ENCODE measurements at regions of chr19 and their contacts with region 1.

Region 1: DNA sequence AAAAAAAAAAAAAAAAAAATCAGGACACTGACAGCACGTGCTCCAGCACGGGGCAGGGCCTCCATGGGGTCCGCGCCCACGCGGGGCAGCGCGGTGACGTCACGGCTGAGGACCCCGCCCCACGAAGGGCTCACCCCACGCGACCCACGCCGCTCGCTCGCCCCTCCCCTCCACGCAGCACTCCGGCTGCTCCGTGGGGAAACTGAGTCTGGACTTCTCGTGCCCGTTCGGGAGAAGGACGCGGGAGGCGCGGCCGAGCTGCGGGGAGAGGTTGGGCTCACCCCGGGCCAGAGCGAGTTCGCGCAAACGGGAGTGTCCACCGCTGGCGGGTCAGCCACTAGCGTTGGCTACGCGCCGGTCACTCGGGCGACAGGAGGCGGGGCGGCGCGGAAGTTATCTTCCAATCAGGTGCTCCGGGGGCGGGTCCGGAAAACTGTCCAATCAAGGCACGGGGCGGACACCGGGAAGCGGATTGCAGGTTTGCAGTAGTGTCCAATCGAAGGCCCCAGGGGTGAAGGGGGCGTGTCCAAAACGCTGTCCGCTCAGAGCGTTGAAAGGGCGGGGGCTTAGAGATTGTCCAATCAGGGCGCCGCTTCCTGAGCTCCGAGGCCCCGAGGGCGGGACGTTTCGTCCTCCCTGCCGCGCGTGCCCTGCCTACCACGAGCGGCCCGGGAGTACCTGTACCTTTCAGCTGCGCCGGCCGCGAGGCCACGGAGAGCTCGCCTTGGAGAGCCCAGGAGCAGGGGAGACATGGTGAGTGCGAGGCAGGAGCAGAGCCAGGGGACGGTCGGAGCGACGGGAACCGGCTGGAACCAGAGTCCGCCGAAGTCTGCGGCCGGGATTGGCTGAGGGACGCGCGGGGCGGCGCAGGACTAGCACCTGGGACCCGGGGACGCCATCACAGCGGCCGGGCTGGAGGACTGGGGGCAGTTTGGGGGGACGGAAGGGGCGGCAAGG is at the start of gene ZNF57:
- DNase-seq: peak; percentile 100
- H3K4me3 ChIP-seq: peak within 1 kb of the TSS; percentile 74 to 89 (median 77)
- H3K27ac ChIP-seq: peak within 1 kb of the TSS; percentile 79 to 91 (median 88)
- H3K4me1 ChIP-seq: peaks cover 7 to 19% (median 17%) of the 10 kb centered on the region in 4 donors
- H3K27me3 ChIP-seq: no peaks in the 10 kb centered on the region
- CTCF ChIP-seq: peak in 1 of 3 experiments; percentile 19
- EP300 ChIP-seq: no peak
- POLR2A ChIP-seq: peak; percentile 21
- total RNA-seq, gene ZNF57: 2.2 to 3.6 (median 2.3) TPM

Region 2: DNA sequence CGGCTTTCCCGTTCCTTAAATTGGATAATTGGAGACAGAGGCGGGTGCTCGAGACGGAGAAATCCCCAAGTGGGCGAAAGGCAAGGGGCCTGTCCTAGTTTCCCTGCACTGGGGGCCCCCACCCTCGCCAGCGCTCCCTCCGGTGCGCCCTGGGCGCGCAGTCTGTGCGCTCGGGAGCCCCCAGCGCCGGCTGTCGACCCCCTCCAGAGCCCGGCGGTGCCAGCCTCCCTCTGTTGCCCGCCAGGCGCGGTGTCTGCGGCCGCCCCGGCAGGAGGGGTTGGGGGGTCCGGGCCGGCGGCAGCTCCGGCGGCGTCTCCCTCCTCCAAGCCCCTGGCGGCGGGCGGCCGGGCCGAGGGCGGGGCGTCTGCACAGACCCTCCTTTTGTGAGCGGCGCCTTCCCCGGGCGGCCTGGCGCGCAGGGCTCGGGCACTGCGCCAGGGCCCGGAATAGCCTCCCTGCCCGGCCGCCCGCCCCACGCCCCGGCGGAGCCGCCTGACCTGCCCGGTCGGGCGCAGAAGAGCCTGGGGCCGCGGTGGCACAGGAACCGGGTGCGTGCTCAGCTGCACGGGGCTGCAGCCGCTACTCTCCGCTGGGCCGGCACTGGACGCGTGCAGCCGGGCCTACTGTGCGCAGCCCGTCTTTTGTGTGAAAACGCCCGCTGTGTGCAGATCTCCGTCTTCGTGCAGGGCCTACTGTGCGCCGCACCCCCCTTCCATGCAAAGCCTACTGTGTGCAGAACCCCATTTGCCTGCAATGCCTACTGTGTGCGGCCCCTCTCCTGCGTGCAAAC is 411.4 kb before region 1 on chr19:
- intact Hi-C with region 1: no loop called
- DNase-seq: no peak
- H3K4me3 ChIP-seq: peak overlapping the region; percentile 58 to 61 (median 60)
- H3K27ac ChIP-seq: peak overlapping the region; percentile 64 to 80 (median 76)
- H3K4me1 ChIP-seq: peaks cover 37 to 55% (median 48%) of the 10 kb centered on the region in 4 donors
- H3K27me3 ChIP-seq: no peaks in the 10 kb centered on the region
- CTCF ChIP-seq: no peak
- EP300 ChIP-seq: no peak
- POLR2A ChIP-seq: no peak

Region 3: DNA sequence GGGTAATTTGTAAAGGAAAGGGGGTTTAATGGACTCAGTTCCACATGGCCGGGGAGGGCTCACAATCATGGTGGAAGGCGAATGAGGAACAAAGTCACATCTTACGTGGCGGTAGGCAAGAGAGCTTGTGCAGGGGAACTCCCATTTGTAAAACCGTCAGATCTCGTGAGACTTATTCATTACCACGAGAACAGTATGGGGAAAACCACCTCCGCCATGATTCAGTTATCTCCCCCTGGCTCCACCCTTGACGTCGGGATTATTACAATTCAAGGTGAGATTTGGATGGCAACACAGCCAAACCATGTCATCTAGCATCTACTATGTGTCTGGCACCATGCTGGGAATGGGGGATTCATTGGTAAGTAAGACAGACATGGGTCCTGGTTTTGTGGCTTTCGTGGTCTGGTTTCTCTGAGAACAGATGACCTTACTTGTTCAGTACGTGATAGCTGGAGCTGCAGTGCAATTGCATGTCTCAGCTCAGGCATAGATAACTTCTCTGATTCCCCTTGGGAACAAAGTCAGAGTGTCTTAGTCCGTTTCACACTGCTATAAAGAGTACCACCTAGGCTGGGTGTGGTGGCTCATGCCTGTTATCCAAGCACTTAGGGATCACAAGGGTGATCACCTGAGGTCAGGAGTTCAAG is 72.6 kb before region 1 on chr19:
- intact Hi-C with region 1: no loop called
- DNase-seq: no peak
- H3K4me3 ChIP-seq: no peak overlapping the region
- H3K27ac ChIP-seq: no peak overlapping the region
- H3K4me1 ChIP-seq: no peaks in the 10 kb centered on the region
- H3K27me3 ChIP-seq: no peaks in the 10 kb centered on the region
- CTCF ChIP-seq: no peak
- EP300 ChIP-seq: no peak
- POLR2A ChIP-seq: no peak

Region 4: DNA sequence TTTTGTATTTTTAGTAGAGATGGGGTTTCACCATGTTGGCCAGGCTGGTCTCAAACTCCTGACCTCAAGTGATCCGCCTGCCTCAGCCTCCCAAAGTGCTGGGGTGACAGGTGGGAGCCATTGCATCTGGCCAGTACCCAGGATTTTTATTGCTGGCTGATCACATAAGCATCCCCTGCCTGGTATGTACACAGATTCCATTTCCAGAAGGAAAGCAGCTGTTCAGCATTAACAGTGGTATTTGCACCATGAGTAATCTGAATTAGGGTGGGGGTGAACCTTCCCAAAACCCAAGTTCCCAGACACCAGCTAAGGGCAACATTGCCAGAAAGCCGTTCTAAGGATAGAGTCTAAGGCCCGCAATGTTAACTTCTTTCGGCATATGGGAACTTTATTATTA is 52.0 kb before region 1 on chr19:
- intact Hi-C with region 1: no loop called
- DNase-seq: no peak
- H3K4me3 ChIP-seq: no peak overlapping the region
- H3K27ac ChIP-seq: no peak overlapping the region
- H3K4me1 ChIP-seq: peaks cover 0 to 5% (median under 1%) of the 10 kb centered on the region in 4 donors
- H3K27me3 ChIP-seq: no peaks in the 10 kb centered on the region
- CTCF ChIP-seq: no peak
- EP300 ChIP-seq: no peak
- POLR2A ChIP-seq: no peak

Region 5: GRCh38 chr19:2944775-2945574 is 44.4 kb after region 1 on chr19 and contains the start of gene ZNF77:
- intact Hi-C with region 1: loop called (anchors 5 kb)
- DNase-seq: peak; percentile 100
- H3K4me3 ChIP-seq: peak within 1 kb of the TSS; percentile 83 to 95 (median 88)
- H3K27ac ChIP-seq: peak within 1 kb of the TSS; percentile 82 to 96 (median 92)
- H3K4me1 ChIP-seq: peaks cover 25 to 35% (median 30%) of the 10 kb centered on the region in 4 donors
- H3K27me3 ChIP-seq: no peaks in the 10 kb centered on the region
- CTCF ChIP-seq: peak in 2 of 3 experiments; percentile 21 to 36
- EP300 ChIP-seq: no peak
- POLR2A ChIP-seq: no peak
- total RNA-seq, gene ZNF77: 2.5 to 4.2 (median 3.0) TPM

Region 6: DNA sequence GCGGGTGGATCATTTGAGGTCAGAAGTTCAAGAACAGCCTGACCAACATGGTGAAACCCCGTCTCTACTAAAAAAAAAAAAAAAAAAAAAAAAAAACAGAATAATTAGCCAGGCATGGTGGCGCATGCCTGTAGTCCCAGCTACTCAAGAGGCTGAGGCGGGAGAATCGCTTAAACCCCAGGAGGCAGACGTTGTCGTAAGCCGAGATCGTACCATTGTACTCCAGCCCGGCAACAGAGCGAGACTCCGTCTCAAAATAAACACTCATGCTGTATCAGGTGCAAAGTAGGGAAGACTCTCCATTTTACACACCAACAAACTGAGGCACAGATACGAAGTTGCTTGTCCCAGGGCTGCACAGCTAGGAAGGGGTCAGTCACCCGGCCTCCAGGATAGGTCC is 92.4 kb after region 1 on chr19:
- intact Hi-C with region 1: no loop called
- DNase-seq: no peak
- H3K4me3 ChIP-seq: no peak overlapping the region
- H3K27ac ChIP-seq: no peak overlapping the region
- H3K4me1 ChIP-seq: no peaks in the 10 kb centered on the region
- H3K27me3 ChIP-seq: no peaks in the 10 kb centered on the region
- CTCF ChIP-seq: no peak
- EP300 ChIP-seq: no peak
- POLR2A ChIP-seq: no peak

Measured in esophagus muscularis mucosa (tissue), 4 donors.